PC-9 (cell line): ENCODE measurements at regions of chr12 and their contacts with region 1.

Region 1: GRCh38 chr12:116277393-116278278 is at the start of gene MED13L:
- DNase-seq: peak; percentile 66 to 89
- H3K4me3 ChIP-seq: peak within 1 kb of the TSS; percentile 89
- H3K27ac ChIP-seq: peak within 1 kb of the TSS; percentile 59
- H3K4me1 ChIP-seq: peaks cover 38% of the 10 kb centered on the region
- H3K27me3 ChIP-seq: no peaks in the 10 kb centered on the region
- CTCF ChIP-seq: no peak
- total RNA-seq, gene MED13L: 89.5 and 101 TPM in 2 replicates

Region 2: DNA sequence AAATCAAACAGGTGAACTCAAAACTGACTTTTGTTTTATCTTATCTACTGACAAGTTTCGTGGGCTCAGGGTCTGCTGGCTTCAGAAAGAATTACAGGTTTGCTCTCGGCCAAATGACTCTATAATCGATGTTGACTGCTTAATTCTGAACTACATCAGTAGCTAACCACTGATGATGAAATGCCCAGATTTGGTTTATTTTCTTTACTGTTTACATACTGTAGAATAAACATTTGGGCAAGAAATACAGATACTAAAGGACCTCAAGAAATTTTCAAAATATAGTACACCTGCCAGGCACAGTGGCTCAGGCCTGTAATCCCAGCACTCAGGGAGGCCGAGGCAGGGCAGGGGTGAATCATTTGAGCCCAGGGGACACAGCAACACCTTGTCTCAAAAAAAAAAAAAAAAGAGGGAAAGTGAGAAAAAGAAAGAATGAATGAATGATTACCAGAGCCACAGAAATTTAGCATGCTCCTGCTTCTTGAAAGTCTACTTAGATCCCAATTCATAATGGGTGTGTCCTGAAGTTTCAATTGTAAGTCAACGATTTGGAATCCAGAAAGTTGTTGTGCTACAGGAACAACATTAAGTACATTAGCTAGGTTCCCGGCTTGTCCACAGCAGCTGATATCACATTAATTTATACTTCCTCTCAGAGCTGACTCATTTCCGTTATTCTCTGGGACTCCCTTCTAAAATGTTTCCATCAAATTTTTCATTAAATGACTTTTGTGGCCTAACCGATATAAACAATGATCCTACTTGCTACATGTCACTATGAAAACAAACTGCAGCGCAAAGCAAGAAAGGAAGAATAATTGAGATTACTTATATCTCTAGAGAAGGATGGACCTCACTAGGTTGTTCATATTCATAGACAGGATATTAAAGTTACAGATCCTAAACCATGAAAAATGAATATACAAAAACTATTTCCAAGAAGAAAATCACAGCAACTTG is 134.4 kb before region 1 on chr12:
- CTCF ChIA-PET with region 1: interaction called, 6 read pairs
- POLR2A ChIA-PET with region 1: no interaction called
- intact Hi-C with region 1: loop called (anchors 2 kb)
- DNase-seq: peak in 1 of 2 experiments; percentile 83
- H3K4me3 ChIP-seq: no peak overlapping the region
- H3K27ac ChIP-seq: peak overlapping the region; percentile 81
- H3K4me1 ChIP-seq: peaks cover 23% of the 10 kb centered on the region
- H3K27me3 ChIP-seq: no peaks in the 10 kb centered on the region
- CTCF ChIP-seq: no peak

Region 3: DNA sequence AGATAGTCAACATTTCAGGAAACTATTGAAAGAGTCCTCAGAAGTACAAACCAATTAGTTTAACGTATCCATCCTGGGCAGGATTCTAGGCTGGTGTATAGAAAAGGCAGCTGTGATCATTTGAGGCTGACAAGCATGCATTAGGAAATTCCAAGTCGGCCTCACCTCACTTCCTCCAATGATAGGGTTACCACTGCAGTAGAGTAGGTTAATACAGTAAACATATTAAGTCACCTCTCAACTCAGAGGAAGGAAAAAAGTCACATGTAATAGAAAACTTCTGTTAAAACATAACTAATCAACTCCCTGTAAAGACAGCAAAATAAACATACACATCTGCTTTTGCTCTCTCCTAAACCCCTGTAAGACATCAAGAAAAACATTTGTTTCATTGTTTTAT is 33.6 kb before region 1 on chr12:
- CTCF ChIA-PET with region 1: no interaction called
- POLR2A ChIA-PET with region 1: no interaction called
- intact Hi-C with region 1: no loop called
- DNase-seq: no peak
- H3K4me3 ChIP-seq: no peak overlapping the region
- H3K27ac ChIP-seq: no peak overlapping the region
- H3K4me1 ChIP-seq: peaks cover 8% of the 10 kb centered on the region; the same call in 1 of the 2 replicates
- H3K27me3 ChIP-seq: no peaks in the 10 kb centered on the region
- CTCF ChIP-seq: no peak

Region 4: GRCh38 chr12:116310082-116310481 is 32.4 kb after region 1 on chr12:
- CTCF ChIA-PET with region 1: no interaction called
- POLR2A ChIA-PET with region 1: interaction called, 11 read pairs
- intact Hi-C with region 1: no loop called
- DNase-seq: no peak
- H3K4me3 ChIP-seq: no peak overlapping the region
- H3K27ac ChIP-seq: no peak overlapping the region
- H3K4me1 ChIP-seq: no peaks in the 10 kb centered on the region
- H3K27me3 ChIP-seq: no peaks in the 10 kb centered on the region
- CTCF ChIP-seq: no peak

Region 5: GRCh38 chr12:116495274-116495673 is 217.6 kb after region 1 on chr12:
- CTCF ChIA-PET with region 1: no interaction called
- POLR2A ChIA-PET with region 1: no interaction called
- intact Hi-C with region 1: loop called (anchors 2 kb)
- DNase-seq: peak; percentile 78 to 99
- H3K4me3 ChIP-seq: no peak overlapping the region
- H3K27ac ChIP-seq: peak overlapping the region; percentile 95
- H3K4me1 ChIP-seq: peaks cover 61% of the 10 kb centered on the region
- H3K27me3 ChIP-seq: no peaks in the 10 kb centered on the region
- CTCF ChIP-seq: no peak

Region 6: DNA sequence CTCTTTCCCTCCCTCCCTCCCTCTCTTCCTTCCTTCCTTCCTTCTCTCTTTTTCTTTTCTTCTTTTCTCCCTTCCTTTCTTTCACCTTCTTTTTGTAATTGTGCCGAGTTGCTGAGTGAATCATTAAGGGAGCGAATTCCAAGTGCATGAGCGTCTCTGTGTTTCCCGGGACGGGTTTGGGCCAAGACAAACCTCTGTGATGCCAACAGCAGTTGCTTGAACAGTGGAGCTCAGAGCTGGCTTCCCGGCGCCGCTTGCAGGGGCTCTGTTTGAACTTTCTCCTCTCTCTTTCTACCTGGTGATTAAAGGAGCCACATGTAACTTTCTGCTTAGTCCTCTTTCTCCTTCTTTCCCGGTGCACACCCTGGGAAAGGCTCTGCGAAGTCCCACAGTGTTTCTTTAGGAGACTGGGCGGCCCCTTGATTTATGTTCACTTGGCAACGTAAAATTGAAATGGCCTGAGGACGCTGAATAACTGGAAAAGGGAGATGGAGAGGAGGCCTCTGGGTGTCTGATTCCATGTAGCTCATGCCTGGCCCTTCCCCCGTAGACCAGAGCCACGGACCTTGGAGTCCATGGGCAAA is 247.9 kb after region 1 on chr12:
- CTCF ChIA-PET with region 1: no interaction called
- POLR2A ChIA-PET with region 1: no interaction called
- intact Hi-C with region 1: loop called (anchors 2 kb)
- DNase-seq: peak; percentile 55 to 64
- H3K4me3 ChIP-seq: no peak overlapping the region
- H3K27ac ChIP-seq: no peak overlapping the region
- H3K4me1 ChIP-seq: peaks cover 40% of the 10 kb centered on the region
- H3K27me3 ChIP-seq: no peaks in the 10 kb centered on the region
- CTCF ChIP-seq: no peak

Region 7: GRCh38 chr12:116599285-116600136 is 321.9 kb after region 1 on chr12:
- CTCF ChIA-PET with region 1: interaction called, 5 read pairs
- POLR2A ChIA-PET with region 1: no interaction called
- intact Hi-C with region 1: loop called (anchors 2 kb)
- DNase-seq: peak in 1 of 2 experiments; percentile 55
- H3K4me3 ChIP-seq: no peak overlapping the region
- H3K27ac ChIP-seq: no peak overlapping the region
- H3K4me1 ChIP-seq: peaks cover 10% of the 10 kb centered on the region
- H3K27me3 ChIP-seq: no peaks in the 10 kb centered on the region
- CTCF ChIP-seq: peak; percentile 42; the same call in 1 of the 2 replicates